Astrocyte of the cerebellum (primary cell): ENCODE measurements at regions of chr18 and their contacts with region 1.

Region 1: DNA sequence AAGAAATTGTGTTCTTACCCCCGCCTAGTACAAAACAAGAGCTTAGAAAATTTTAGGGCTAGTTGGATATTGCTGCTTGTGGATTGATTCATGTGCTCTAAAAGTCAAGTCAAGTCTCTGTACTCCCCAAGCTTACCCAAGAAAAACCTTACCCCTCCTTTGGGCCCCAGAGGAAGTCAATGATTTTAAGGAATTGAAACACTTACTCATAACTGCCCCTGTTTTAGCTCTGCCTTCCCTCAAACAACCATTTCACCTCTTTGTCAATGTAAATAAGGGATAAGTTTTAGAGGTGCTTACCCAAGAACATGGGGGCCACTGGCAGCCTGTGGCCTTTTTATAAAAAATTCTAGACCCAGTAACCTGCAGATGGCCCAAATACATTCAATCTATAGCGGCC is 136.6 kb upstream of the RMP24 start:
- DNase-seq: no peak
- H3K4me3 ChIP-seq: no peak overlapping the region
- CTCF ChIP-seq: no peak

Region 2: DNA sequence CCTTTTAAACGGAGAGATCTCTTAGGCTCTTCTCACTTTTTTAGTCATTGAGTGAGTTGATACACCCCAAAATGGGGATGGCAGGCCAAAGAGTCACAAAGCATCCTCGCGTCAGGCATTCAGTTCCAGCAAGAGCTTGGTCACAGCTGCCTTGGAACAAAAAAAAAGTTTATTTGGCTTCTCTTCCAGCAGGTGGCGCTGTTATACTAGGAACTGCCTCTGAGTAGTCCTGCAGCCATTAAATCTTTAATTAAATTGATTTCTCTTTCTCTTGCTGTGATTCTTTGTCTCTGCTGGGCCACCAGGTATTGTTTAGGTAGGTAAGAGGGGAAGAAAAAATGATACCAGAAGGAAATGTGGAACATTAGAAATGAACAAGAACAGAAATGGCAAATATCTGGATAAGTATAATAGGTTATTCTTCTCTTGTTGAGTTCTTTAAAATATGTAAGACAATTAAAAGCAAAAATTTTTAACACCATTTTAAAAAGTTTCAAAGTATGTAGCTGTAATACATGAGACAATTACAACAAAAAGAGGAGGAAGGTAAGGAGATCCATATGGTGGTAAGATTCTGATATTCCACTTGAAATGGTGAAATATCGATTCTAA is 79.2 kb before region 1 on chr18:
- in situ Hi-C with region 1: no loop called
- DNase-seq: peak; percentile 37
- H3K4me3 ChIP-seq: no peak overlapping the region
- CTCF ChIP-seq: peak; percentile 63

Region 3: GRCh38 chr18:35775887-35776286 is 59.9 kb before region 1 on chr18:
- in situ Hi-C with region 1: no loop called
- DNase-seq: peak; percentile 20
- H3K4me3 ChIP-seq: no peak overlapping the region
- CTCF ChIP-seq: no peak

Region 4: DNA sequence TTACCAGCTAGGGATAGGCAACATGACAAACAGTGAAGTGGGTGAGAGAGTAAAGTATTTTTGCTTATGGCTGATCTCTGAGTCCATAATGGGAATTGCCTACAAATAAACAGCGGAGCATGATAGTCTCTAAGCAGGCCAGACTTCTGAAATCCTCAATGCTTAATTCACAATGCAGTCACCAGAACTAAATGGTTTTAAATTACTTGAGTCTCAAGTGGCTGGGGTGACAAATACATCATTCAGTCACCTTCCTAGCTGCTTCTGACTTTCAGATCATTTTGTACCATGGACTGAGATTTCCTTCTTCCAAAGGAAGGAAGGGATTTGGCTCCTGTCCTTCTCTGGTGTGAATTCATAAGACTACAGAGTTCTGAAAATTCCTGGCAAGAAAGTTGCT is 53.8 kb after region 1 on chr18:
- in situ Hi-C with region 1: loop called (anchors 5 kb)
- DNase-seq: no peak
- H3K4me3 ChIP-seq: no peak overlapping the region
- CTCF ChIP-seq: no peak